ENCODE measurements at regions of chr1 and their contacts with region 1.

Region 1: GRCh38 chr1:207963427-207964194 is 52.7 kb upstream of the CD34 start:
- DNase-seq: peak; percentile 87 to 95
- ATAC-seq: peak; percentile 80 to 90 (median 82)
- H3K4me3 ChIP-seq: peak overlapping the region in 9 of 10 donors; percentile 41 to 66 (median 60)
- H3K27ac ChIP-seq: peak overlapping the region; percentile 89 to 98 (median 94)
- H3K4me1 ChIP-seq: peaks cover 21 to 65% (median 48%) of the 10 kb centered on the region in 9 donors
- H3K27me3 ChIP-seq: peaks cover 0 to 18% (median 0%) of the 10 kb centered on the region in 7 donors
- CTCF ChIP-seq: peak; percentile 97 to 100 (median 99)

Region 2: DNA sequence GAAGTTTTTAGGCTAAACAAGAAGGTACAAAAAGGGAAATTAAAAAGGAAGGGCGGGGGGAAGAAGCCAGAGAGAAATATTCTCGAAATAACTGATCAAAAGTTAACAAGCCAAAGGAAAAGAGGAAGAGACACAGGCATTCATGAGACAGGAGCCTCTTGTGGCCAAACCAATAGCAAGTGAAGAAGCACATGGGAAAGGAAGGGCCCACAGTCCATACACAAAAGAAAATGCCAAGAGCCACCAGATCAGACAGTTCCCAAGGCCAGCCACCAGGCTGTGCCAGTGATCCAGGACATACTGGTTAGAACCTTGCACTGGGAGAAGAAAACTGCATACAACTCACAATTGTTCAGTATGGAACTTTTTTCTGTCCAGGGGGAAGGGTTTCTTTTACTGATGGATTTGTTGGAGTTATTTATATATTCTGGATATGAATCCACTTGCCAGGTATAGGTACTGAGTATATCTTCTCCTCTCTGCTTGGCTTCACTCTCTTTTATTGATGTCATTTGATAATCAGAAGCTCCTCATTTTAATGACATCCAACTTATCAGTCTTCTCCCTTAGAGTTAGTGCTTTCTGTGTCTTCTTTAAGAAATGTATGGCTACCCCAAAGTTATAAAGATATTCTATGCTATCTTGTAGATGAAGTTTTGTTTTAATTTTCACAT is 135.0 kb before region 1 on chr1:
- intact Hi-C with region 1: loop called in 8 of 10 experiments (anchors 2 to 10 kb)
- DNase-seq: peak; percentile 73 to 84
- ATAC-seq: peak; percentile 31 to 65 (median 56)
- H3K4me3 ChIP-seq: no peak overlapping the region
- H3K27ac ChIP-seq: peak overlapping the region; percentile 10 to 100 (median 94)
- H3K4me1 ChIP-seq: peaks cover 38 to 98% (median 89%) of the 10 kb centered on the region in 9 donors
- H3K27me3 ChIP-seq: no peaks in the 10 kb centered on the region
- CTCF ChIP-seq: peak; percentile 82 to 96 (median 90)

Region 3: GRCh38 chr1:207897188-207897587 is 66.4 kb before region 1 on chr1:
- intact Hi-C with region 1: loop called in 6 of 10 experiments (anchors 2 to 5 kb)
- DNase-seq: no peak
- ATAC-seq: peak in 1 of 8 donors; percentile 25
- H3K4me3 ChIP-seq: no peak overlapping the region
- H3K27ac ChIP-seq: peak overlapping the region in 6 of 10 donors; percentile 5 to 98 (median 34)
- H3K4me1 ChIP-seq: peaks cover 11 to 98% (median 38%) of the 10 kb centered on the region in 9 donors
- H3K27me3 ChIP-seq: no peaks in the 10 kb centered on the region
- CTCF ChIP-seq: peak in 8 of 9 donors; percentile 27 to 65 (median 42)

Region 4: DNA sequence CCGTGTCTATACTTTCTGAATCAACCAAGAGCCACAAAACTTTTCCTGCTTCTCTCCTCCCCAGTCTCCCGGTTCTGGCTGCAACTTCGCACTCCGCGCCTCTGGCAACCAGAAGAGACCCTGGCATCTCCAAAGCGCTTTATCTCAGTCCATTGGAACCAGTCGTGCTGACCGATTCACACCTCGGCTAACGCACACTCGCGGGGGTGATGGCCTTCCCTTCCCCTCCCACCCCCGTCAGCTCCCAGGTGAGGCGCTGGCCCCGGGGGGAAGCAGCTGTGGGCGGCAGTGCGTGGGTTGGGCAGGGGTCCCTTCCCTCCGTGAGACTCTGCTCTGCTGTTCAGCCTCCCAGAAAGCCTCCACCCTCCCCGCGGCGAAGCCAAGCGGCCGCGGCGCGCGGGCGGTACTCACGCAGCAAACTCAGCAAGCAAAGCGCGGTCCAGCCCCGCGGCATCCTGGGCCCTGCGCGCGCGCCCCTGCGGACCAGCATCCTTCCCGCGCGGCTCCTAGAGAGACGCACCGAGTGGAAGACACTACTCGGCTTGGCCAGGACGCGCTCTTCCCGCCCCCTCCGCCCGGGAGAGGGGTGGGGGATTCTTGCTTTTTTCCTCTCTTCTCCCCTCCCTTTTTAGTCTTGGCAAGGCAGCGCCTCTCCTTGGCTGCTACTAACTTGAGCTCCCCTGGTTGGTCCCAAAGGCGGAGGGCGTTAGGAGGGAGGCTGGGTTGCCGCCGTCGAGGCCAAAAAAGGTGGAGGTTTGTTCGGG is 52.8 kb before region 1 on chr1 and contains the start of gene CD34:
- intact Hi-C with region 1: loop called in 2 of 10 experiments (anchors 5 kb)
- DNase-seq: peak; percentile 78 to 80
- ATAC-seq: peak; percentile 60 to 80 (median 74)
- H3K4me3 ChIP-seq: peak within 1 kb of the TSS; percentile 48 to 85 (median 70)
- H3K27ac ChIP-seq: peak within 1 kb of the TSS; percentile 82 to 98 (median 92)
- H3K4me1 ChIP-seq: peaks cover 0 to 71% (median 41%) of the 10 kb centered on the region in 9 donors
- H3K27me3 ChIP-seq: peaks cover 0 to 42% (median 0%) of the 10 kb centered on the region in 7 donors
- CTCF ChIP-seq: no peak
- total RNA-seq, gene CD34: 44.7 to 97.0 (median 59.2) TPM

Measured in heart right ventricle (tissue), 16 donors.